ENCODE measurements at regions of chr2 and their contacts with region 1.

Region 1: DNA sequence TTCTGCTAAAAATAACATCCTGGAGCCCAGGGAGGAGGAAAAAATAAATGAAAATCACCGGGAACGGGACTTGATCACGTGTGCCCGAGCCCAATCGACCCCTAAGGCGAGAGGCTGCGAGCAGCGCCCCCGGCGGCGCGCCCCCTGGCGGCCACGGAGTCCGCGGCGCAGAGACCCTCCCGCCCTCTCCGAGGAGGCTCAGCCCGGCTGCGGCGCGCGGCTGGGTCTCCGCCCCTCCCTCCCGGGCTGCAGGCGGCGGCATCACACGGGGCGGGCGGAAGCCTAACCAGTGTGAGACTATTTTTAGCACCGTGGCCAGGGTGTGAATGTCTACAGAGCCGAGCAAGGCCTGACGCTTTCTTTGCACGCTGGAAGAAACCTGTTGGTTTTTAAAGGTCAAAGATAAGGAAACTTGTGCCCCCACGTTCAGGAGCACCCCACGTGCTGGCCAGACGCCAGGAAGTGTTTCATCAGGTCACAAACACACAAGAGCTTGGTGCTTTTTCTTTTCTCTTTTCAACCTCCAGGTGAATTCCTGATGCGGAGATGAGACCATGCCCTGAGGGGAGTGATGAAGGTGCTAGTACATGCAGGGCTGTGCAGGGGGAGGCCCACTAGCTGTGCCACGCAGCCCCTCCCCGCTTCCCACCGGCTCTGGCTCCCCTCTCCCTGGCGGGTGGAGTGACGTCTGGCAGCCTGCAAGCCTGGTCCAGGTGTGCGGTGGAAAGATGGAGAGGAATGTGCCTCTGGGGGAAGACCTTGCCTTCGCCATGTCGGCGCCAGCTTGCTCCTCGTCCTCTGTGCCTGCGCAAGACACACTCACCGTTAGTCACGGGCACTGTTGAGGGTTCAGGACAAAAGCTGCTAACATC is 35.3 kb upstream of the DNMT3A start:
- DNase-seq: peak; percentile 83
- ATAC-seq: peak; percentile 91
- H3K4me3 ChIP-seq: peak overlapping the region; percentile 60
- H3K27ac ChIP-seq: peak overlapping the region; percentile 82
- H3K4me1 ChIP-seq: peaks cover 35% of the 10 kb centered on the region
- H3K27me3 ChIP-seq: no peaks in the 10 kb centered on the region
- CTCF ChIP-seq: peak; percentile 96

Region 2: DNA sequence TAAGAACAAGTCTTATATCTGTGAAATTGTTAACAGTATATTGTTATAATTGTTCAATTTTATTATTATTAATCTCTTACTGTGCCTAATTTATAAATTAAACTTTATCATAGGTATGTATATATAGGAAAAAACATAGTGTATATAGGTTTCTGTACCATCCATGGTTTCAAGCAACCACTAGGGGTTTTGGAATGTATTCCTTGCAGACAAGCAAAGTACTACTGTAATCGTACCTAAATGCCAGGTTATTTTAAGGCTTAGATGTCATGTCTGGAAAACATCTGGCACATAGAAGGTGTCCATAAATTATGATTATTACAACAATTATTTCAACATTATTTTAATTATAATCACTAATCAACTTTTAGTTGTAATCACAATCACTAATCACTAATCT is 1025.0 kb before region 1 on chr2:
- CTCF ChIA-PET with region 1: no interaction called
- POLR2A ChIA-PET with region 1: no interaction called
- intact Hi-C with region 1: no loop called
- DNase-seq: peak; percentile 18
- ATAC-seq: no peak
- H3K4me3 ChIP-seq: no peak overlapping the region
- H3K27ac ChIP-seq: no peak overlapping the region
- H3K4me1 ChIP-seq: no peaks in the 10 kb centered on the region
- H3K27me3 ChIP-seq: no peaks in the 10 kb centered on the region
- CTCF ChIP-seq: 0 out of 2 replicates have a peak, but pooled peaks have one; percentile 13

Region 3: GRCh38 chr2:25184261-25184695 is 192.7 kb before region 1 on chr2:
- CTCF ChIA-PET with region 1: no interaction called
- POLR2A ChIA-PET with region 1: no interaction called
- intact Hi-C with region 1: no loop called
- DNase-seq: peak; percentile 56
- ATAC-seq: peak; percentile 57
- H3K4me3 ChIP-seq: no peak overlapping the region
- H3K27ac ChIP-seq: no peak overlapping the region
- H3K4me1 ChIP-seq: no peaks in the 10 kb centered on the region; the same call in 1 of the 2 replicates
- H3K27me3 ChIP-seq: 0 out of 2 replicates have a peak, but pooled peaks cover 2% of the 10 kb centered on the region
- CTCF ChIP-seq: no peak

Region 4: GRCh38 chr2:25512707-25513106 is 135.7 kb after region 1 on chr2:
- CTCF ChIA-PET with region 1: no interaction called
- POLR2A ChIA-PET with region 1: interaction called, 6 read pairs
- intact Hi-C with region 1: loop called (anchors 2 kb)
- DNase-seq: peak; percentile 39
- ATAC-seq: peak; percentile 84
- H3K4me3 ChIP-seq: no peak overlapping the region
- H3K27ac ChIP-seq: no peak overlapping the region
- H3K4me1 ChIP-seq: peaks cover 11% of the 10 kb centered on the region
- H3K27me3 ChIP-seq: no peaks in the 10 kb centered on the region
- CTCF ChIP-seq: no peak

Region 5: DNA sequence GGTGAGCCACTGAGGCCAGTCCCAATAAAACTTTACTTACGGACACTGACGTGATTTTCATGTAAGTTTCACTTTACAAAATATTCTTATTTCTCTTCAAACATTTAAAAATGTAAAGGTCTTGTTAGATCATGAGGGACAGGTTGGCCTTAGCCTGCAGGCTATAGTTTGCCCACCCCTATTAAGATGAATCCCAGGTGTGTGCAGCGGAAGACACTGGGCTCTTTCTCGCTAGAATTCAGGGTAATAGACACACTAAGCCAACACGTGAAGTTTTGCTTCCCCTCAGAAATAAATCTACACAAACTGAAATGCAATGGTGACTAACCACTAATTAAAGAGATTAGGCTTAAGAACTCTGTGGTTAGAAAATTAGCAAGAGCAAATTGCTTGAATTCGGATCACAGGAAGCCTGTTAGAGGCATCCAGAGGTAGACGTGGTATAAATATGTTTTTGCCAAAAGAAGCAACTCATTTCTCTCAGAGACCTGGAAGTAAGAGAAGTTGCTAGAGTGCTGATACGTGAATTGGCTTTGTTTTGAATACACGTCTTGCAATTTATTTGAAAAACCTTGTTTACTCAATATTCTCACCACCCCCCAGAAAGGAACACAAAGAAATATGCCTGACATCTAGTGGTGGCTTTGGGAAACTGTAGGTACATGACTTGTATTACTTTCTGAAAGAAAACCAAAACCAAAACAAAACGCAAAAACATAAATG is 144.8 kb after region 1 on chr2:
- CTCF ChIA-PET with region 1: no interaction called
- POLR2A ChIA-PET with region 1: no interaction called
- intact Hi-C with region 1: loop called (anchors 1 kb)
- DNase-seq: peak; percentile 80
- ATAC-seq: peak; percentile 85
- H3K4me3 ChIP-seq: peak overlapping the region; percentile 52
- H3K27ac ChIP-seq: no peak overlapping the region
- H3K4me1 ChIP-seq: peaks cover 11% of the 10 kb centered on the region; the same call in 1 of the 2 replicates
- H3K27me3 ChIP-seq: no peaks in the 10 kb centered on the region
- CTCF ChIP-seq: peak; percentile 93

Region 6: GRCh38 chr2:25567406-25567805 is 190.4 kb after region 1 on chr2:
- CTCF ChIA-PET with region 1: no interaction called
- POLR2A ChIA-PET with region 1: no interaction called
- intact Hi-C with region 1: loop called (anchors 1 kb)
- DNase-seq: peak; percentile 67
- ATAC-seq: peak; percentile 85
- H3K4me3 ChIP-seq: no peak overlapping the region
- H3K27ac ChIP-seq: no peak overlapping the region
- H3K4me1 ChIP-seq: no peaks in the 10 kb centered on the region
- H3K27me3 ChIP-seq: no peaks in the 10 kb centered on the region
- CTCF ChIP-seq: peak; percentile 78

Measured in PC-3 (cell line).